ENCODE measurements at regions of chr4 and their contacts with region 1.

Region 1: GRCh38 chr4:162770761-162771490 is 395.8 kb downstream of the NAF1 start:
- DNase-seq: no peak

Region 2: DNA sequence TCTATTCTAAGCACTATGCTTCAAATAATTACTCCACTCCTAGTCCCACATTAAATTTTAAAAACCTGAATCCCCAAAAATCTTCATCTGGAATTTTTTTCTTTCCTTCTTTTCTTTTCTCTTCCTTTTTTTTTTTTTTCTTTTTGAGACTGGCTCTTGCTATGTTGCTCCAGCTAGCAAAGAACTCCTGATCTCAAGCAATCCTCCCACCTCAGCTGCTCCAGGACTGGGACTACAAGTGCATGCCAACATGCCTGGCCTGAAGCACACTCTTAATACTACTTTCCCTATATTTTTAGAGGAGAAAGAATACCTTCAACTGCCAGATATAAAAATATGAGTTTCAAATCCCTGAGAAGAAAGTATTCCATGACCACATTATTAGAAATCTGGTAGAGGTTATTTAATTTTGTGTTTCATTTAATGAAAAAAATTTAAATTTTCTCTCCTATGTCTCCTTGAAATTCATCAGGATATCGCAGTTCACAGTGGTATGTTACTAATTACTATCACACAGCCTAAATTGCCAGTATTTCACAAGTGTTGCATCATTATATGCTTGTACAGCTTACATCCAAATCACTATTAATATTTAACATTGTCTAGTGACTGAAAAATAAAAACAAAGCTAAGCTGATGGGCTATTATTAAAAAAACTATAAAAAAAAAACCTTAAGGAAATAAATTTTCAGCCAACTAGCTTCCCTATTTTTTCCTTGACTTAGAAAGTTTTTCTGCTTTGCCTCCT is 168.0 kb after region 1 on chr4:
- intact Hi-C with region 1: no loop called
- DNase-seq: no peak

Region 3: GRCh38 chr4:163042306-163042705 is 271.4 kb after region 1 on chr4:
- intact Hi-C with region 1: loop called (anchors 10 kb)
- DNase-seq: no peak

Measured in posterior cingulate gyrus (tissue), 11 donors.